IMR-90 (cell line): ENCODE measurements at regions of chr19 and their contacts with region 1.

Region 1: GRCh38 chr19:3314962-3315675 is 51.3 kb upstream of the NFIC start:
- DNase-seq: no peak
- ATAC-seq: no peak
- H3K4me3 ChIP-seq: no peak overlapping the region
- H3K27ac ChIP-seq: no peak overlapping the region
- H3K4me1 ChIP-seq: no peaks in the 10 kb centered on the region
- H3K27me3 ChIP-seq: peaks cover 24% of the 10 kb centered on the region
- CTCF ChIP-seq: no peak
- POLR2A ChIP-seq: no peak
- RAD21 ChIP-seq: no peak

Region 2: DNA sequence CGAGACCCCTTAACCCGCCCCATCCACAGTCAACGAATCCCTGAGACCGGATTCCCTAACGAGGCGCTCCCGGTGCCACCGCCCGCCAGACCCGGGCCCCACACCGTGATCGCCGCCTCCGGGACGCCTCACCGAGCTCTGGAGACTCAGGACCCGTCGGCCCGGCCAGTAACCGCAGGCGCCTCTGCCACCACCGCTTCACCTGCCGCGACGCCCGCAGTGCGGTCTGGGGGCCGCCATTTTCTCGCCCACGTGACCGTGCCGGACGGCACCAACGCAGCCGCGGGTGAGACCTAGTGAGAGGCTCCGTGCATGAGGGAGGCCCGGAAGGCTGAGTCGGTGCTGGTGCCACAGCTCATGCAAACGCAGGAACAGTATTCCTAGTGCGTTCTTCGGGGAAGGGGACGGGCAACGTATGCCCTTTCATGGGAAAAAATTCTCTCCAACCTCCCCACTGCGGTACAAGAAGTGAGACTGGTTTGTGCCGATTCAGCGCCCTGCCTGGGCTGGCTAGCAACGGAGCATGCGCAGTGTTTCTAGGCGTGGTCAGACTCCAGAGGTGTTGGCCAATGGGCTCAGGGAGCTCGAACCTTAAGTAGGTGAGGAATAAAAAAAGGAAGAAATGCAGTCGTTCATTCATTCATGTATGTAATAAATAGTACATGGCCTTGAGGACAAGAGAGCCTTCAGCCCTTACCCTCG is 185.5 kb after region 1 on chr19 and contains the start of gene DOHH:
- CTCF ChIA-PET with region 1: no interaction called
- POLR2A ChIA-PET with region 1: interaction called, 10 read pairs
- dilution Hi-C with region 1: no loop called
- in situ Hi-C with region 1: no loop called
- intact Hi-C with region 1: no loop called
- DNase-seq: peak; percentile 96
- ATAC-seq: peak; percentile 97
- H3K4me3 ChIP-seq: peak within 1 kb of the TSS; percentile 57
- H3K27ac ChIP-seq: peak within 1 kb of the TSS; percentile 89
- H3K4me1 ChIP-seq: no peaks in the 10 kb centered on the region
- H3K27me3 ChIP-seq: no peaks in the 10 kb centered on the region
- CTCF ChIP-seq: no peak
- POLR2A ChIP-seq: peak; percentile 88
- RAD21 ChIP-seq: no peak
- total RNA-seq, gene DOHH: 3.2 and 4.2 TPM in 2 replicates